Common myeloid progenitor, CD34-positive (primary cell): ENCODE measurements at regions of chrX and their contacts with region 1.

Region 1: DNA sequence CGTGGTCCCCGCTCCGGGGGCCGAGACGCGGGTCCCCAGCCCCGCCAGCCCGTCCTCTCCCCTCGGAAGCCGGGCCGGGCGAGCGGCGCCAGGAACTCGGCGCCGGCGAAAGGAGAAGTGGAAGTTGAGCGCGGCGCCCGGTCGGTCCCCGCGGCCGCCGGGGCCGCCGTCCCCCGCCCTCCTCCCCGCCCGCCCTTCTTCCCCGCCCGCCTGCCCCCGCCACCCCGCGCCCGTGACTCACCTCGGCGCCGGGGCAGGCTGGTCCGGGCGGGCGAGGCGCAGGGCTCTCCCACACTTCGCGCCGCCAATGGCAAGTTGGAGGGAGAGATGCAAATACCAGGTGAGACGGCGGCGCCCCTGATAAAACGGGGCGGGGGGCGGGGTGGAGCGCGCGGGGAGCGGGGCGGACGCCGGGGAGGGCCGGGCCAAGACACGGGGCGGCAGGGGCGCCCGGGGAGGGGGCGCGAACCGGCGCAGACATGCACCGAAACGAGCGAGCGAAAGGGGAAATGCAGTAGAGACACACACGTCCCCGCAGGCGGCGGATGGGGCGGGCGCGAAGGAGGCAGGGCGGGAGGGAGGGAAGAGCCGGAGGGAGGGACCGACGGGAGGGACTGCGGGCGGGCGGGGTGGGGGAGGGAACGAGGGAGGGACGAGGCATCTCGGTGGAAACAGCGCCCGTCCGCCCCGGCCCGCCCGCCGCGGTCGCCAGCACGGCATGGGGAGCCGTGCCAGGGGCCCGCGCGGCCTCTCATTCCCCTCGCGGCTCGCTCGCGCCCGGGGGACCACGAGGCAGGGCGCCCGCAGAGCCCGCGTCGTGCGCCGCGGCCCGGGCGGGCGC is at the start of gene ELF4:
- DNase-seq: peak; percentile 68 to 82 (median 76)
- H3K4me3 ChIP-seq: peak within 1 kb of the TSS; percentile 55 to 80 (median 69)
- H3K27ac ChIP-seq: peak within 1 kb of the TSS; percentile 64 to 87
- H3K4me1 ChIP-seq: peaks cover 3 to 36% (median 29%) of the 10 kb centered on the region in 4 experiments
- H3K27me3 ChIP-seq: peaks cover 0 to 2% (median 0%) of the 10 kb centered on the region in 5 experiments

Region 2: DNA sequence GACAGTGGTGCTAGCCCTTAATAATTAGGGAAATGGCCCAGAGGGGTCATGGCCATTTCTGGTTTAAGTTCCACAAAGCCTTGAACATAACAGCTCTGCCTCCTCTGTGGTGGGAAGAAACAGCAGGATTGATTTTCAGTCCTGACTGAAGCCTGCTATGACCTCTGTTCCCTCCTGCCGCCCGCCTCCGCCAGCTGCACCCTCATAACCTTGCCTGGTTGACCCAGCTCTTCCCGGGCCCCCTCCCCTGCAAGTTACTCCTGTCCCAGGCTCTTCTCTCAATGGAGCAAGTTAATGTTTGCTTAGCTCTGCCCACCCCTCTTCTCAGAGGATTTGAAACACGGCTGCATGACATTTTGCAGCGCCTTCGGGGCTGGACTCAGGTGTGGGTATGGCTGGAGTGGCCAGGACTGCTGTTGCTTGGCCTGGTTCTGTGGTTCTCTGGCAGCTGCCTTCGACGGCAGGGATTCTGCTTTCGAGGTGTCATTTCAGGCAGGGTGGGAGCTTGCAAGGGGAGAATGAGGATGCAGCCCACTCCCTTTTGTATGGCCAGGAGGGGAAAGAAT is 100.9 kb before region 1 on chrX:
- CTCF ChIA-PET with region 1: no interaction called
- POLR2A ChIA-PET with region 1: no interaction called
- DNase-seq: no peak
- H3K4me3 ChIP-seq: no peak overlapping the region
- H3K27ac ChIP-seq: no peak overlapping the region
- H3K4me1 ChIP-seq: no peaks in the 10 kb centered on the region
- H3K27me3 ChIP-seq: peaks cover 0 to 7% (median 0%) of the 10 kb centered on the region in 5 experiments

Region 3: DNA sequence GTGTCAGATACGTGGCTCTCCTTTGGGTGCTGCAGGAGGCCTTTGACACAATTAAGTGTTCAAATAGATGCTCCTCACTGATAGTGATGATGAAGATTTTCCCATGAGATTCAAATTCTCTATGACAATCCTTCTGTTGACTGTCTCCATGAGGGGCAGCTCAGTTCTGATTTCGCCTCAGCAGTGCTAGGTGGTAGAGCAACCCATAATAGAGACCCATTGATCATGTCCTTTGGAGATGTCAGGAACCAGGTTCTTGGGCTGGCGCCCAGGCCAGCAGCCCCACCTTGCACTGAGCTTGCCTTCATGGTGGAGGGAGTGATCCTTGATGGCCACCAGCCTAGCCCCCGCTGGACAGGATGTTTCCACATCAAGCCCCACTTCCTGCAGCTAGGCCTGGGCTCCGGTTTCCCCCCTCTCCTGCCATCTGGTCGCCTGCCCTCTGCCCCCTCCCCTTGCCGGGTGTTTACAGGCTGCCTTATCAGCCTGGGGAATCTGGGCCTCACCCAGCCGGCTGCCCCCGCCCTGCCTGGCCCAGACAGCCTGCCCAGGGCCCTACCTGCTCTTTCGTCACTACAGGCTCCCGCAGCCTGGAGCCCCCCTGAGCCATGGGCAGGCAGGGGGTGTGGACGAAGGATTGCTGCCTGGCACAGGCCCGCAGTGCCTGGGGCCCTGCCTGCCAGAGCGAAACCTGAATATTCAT is 12.9 kb before region 1 on chrX:
- CTCF ChIA-PET with region 1: interaction called, 8 read pairs
- POLR2A ChIA-PET with region 1: interaction called, 20 read pairs
- DNase-seq: peak; percentile 71 to 95 (median 93)
- H3K4me3 ChIP-seq: peak overlapping the region in 2 of 7 experiments; percentile 36 to 50
- H3K27ac ChIP-seq: peak overlapping the region in 1 of 2 experiments; percentile 34
- H3K4me1 ChIP-seq: peaks cover 13 to 66% (median 54%) of the 10 kb centered on the region in 4 experiments
- H3K27me3 ChIP-seq: no peaks in the 10 kb centered on the region